ENCODE measurements at regions of chr9 and their contacts with region 1.

Region 1: GRCh38 chr9:17810728-17811571 is 232.1 kb downstream of the SH3GL2 start:
- DNase-seq: peak; percentile 41
- ATAC-seq: peak; percentile 57; the same call in 1 of the 3 replicates
- H3K4me3 ChIP-seq: no peak overlapping the region
- H3K27ac ChIP-seq: no peak overlapping the region
- H3K4me1 ChIP-seq: no peaks in the 10 kb centered on the region
- H3K27me3 ChIP-seq: no peaks in the 10 kb centered on the region
- CTCF ChIP-seq: peak; percentile 65
- EP300 ChIP-seq: no peak
- POLR2A ChIP-seq: no peak
- RAD21 ChIP-seq: peak; percentile 34; the same call in 1 of the 2 replicates

Region 2: GRCh38 chr9:17695482-17695881 is 115.5 kb before region 1 on chr9:
- CTCF ChIA-PET with region 1: no interaction called
- POLR2A ChIA-PET with region 1: no interaction called
- in situ Hi-C with region 1: no loop called
- intact Hi-C with region 1: no loop called
- DNase-seq: no peak
- ATAC-seq: no peak
- H3K4me3 ChIP-seq: no peak overlapping the region
- H3K27ac ChIP-seq: no peak overlapping the region
- H3K4me1 ChIP-seq: no peaks in the 10 kb centered on the region
- H3K27me3 ChIP-seq: no peaks in the 10 kb centered on the region
- CTCF ChIP-seq: no peak
- EP300 ChIP-seq: no peak
- POLR2A ChIP-seq: no peak
- RAD21 ChIP-seq: no peak

Region 3: GRCh38 chr9:17852108-17852507 is 41.2 kb after region 1 on chr9:
- CTCF ChIA-PET with region 1: no interaction called
- POLR2A ChIA-PET with region 1: no interaction called
- in situ Hi-C with region 1: no loop called
- intact Hi-C with region 1: no loop called
- DNase-seq: no peak
- ATAC-seq: no peak
- H3K4me3 ChIP-seq: no peak overlapping the region
- H3K27ac ChIP-seq: no peak overlapping the region
- H3K4me1 ChIP-seq: no peaks in the 10 kb centered on the region
- H3K27me3 ChIP-seq: no peaks in the 10 kb centered on the region
- CTCF ChIP-seq: no peak
- EP300 ChIP-seq: no peak
- POLR2A ChIP-seq: no peak
- RAD21 ChIP-seq: no peak

Region 4: GRCh38 chr9:17878810-17879370 is 67.9 kb after region 1 on chr9:
- CTCF ChIA-PET with region 1: no interaction called
- POLR2A ChIA-PET with region 1: no interaction called
- in situ Hi-C with region 1: no loop called
- intact Hi-C with region 1: loop called (anchors 10 kb)
- DNase-seq: no peak
- ATAC-seq: no peak
- H3K4me3 ChIP-seq: no peak overlapping the region
- H3K27ac ChIP-seq: no peak overlapping the region
- H3K4me1 ChIP-seq: no peaks in the 10 kb centered on the region
- H3K27me3 ChIP-seq: no peaks in the 10 kb centered on the region
- CTCF ChIP-seq: no peak
- EP300 ChIP-seq: no peak
- POLR2A ChIP-seq: no peak
- RAD21 ChIP-seq: no peak

Region 5: DNA sequence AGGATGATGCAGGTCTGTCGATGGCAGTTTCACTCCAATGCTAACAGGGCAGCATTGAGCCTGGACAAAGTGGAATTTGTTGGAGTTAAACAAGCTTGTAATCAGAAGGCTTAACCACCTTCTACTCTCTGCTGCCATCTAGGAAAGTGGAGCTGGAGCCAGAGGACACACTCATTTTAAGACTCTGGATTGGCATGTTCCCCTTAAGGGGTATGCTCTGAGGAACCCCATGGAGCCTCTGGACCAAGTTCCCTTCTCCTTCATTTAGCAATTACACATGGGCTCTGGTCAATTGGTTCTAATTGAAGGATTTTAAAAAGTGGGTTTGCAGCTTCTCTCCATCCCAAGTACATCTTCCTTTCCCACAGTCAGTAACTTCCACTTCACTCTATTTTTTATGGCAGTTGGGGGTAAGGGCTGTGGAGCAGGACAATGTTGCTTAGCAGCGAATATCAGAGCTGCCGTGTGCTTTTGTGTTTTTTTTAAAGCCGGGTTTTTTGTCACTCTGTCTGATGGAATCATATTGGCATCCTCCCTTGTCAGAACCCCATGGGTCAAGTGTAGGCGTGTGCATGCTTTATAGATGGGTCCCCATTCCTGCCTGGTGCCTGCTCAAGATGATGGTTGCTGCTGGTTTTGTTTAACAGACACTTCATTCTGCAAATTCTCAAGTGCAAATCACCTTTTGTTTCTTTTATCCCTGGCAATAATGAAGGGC is 332.2 kb after region 1 on chr9:
- CTCF ChIA-PET with region 1: no interaction called
- POLR2A ChIA-PET with region 1: no interaction called
- in situ Hi-C with region 1: no loop called
- intact Hi-C with region 1: loop called (anchors 5 kb)
- DNase-seq: no peak
- ATAC-seq: peak; percentile 43; the same call in 2 of the 3 replicates
- H3K4me3 ChIP-seq: no peak overlapping the region
- H3K27ac ChIP-seq: no peak overlapping the region
- H3K4me1 ChIP-seq: no peaks in the 10 kb centered on the region
- H3K27me3 ChIP-seq: no peaks in the 10 kb centered on the region
- CTCF ChIP-seq: no peak
- EP300 ChIP-seq: no peak
- POLR2A ChIP-seq: no peak
- RAD21 ChIP-seq: no peak

Region 6: DNA sequence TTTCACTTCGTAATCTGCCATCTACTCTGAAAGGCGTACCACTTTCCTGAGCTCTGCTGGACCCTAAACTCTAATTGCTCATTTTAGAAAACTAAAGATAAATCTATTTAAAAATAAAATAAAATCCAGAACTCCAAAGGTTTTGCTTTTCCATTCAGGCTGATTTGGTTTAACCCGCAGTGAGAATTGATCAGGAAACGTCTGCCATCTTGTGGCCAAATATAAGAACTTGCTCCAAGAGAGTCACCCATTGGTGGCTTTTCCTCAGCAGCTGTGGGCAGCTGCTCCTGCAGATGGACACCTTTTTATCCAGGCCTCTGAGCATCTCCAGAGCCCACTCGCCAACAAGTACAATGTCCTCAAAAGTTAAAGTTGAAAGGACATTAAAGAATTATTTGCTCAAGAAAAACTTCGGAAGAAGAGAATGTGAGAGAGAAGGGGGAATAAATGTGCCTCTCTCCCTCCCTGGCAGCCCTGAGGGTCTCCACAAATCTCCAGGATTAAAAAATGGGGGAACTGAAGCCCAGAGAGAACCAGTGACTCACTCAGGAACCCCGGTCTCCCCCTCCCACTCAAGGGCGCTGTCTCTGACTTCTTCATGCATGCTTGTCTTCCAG is 1218.0 kb after region 1 on chr9:
- CTCF ChIA-PET with region 1: no interaction called
- POLR2A ChIA-PET with region 1: no interaction called
- in situ Hi-C with region 1: loop called (anchors 25 kb)
- intact Hi-C with region 1: loop called (anchors 5 kb)
- DNase-seq: peak; percentile 54
- ATAC-seq: peak; percentile 87
- H3K4me3 ChIP-seq: no peak overlapping the region
- H3K27ac ChIP-seq: no peak overlapping the region
- H3K4me1 ChIP-seq: no peaks in the 10 kb centered on the region
- H3K27me3 ChIP-seq: peaks cover 0 to 5% of the 10 kb centered on the region in 2 experiments; a peak in 1 of 5 replicates
- CTCF ChIP-seq: peak; percentile 77
- EP300 ChIP-seq: no peak
- POLR2A ChIP-seq: no peak
- RAD21 ChIP-seq: 0 out of 2 replicates have a peak, but pooled peaks have one; percentile 46